Head of caudate nucleus (tissue), 42 donors: ENCODE measurements at regions of chr5 and their contacts with region 1.

Region 1: DNA sequence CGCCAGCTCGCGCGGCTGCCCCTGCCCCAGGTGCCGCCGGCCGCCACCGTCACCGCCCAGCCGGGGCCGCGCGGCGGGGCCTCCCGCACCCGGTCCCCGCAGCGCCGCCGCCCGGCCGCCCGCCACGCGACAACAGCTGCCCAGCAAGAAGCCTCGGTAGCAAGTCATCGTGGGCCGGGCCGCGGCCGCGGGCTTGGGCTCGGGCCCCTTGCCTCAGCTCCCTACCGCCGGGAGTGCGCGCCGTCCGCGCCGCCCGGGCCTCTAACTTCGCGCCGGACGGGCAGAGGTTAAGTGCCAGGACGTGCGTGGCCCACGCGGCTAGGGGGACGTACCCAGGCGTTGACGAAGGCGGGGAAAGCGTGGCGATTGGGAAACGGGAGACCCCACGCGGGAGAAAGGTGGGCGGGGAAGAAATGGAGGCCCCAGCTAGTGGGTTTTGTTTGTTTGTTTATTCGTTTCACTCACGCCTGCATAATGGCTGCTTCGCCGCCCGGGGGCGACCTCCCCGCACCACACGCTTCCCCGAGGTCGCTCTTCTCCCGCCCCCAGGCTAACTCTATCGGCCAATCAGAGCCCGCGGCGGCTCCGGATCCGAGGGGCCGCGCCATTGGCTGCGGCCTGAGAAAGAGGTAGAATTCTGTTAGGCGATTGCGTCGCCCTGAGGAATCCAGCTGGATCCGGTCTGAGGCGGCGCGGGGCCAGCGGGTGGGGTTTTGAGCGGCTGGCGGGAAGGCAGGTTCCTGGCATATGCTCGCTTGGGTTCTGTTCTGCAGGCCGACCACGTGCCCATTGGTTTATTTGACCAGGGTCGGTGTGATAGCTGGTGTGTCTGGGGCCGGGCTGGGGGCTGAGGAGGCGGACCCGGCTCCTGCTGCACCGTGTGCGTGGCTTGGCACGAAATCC is at the start of gene NADK2:
- DNase-seq: peak; percentile 92 to 99 (median 96)

Region 2: DNA sequence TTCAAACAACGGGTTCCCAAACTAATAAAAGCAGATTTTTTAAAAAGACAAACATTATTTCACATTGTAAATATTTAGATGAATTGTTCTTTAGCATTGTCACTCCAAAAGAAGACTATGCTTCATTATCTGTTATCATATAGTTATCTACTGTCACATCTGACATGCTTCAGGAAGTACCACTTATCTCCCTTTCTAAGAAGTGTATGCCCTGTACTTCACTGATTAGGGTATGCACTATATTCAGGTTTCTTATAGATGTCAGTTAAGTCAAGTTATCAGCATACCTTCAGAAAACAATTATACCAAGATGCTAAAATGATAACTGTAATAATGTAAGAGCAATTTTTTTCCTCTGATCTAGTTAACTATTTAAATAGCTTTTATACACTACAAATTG is 130.6 kb before region 1 on chr5:
- intact Hi-C with region 1: no loop called
- DNase-seq: no peak

Region 3: DNA sequence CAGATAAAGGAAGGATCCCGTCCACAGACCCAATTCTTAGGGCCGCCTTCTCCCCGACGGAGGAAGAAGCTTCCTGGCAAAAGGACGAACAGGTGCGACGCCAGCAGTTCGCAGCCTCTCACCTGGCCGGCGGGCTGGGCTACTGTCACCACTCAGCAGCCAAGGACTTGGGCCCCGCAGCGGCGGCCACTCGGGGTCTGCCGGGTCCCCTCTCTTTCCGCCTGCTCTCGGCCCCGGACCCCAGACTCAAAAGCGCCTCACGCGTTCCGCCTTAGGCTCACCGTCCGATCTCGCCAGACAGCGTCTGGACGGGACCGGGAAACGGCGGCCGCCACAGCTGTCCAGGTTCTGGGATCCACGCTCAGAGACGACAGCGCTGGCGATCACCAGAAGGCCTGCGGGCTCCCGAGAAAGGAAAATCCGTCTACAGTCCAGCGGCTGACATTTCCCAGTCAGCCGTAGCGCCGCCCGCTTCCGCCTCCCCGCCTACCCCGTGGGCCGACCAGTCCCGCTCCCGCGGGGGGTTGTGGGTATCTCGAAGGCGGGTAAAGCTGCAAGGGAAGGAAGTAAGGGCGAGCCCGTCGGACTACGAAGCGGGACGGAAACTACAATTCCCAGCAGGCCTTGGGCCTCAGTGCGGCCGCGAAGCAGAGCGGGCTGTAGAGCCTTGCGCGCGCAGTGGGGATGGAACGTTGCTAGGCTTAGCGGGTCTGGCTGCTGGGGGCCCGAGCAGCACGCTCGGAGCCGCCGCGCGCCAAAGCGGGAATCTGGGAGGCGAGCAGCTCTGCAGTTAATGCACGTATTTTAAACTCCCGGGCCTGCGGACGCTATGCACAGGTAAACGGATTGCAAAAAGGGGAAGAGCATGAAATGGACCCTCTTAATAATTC is 90.2 kb before region 1 on chr5 and contains the starts of genes LMBRD2 and SKP2:
- intact Hi-C with region 1: loop called (anchors 5 kb)
- DNase-seq: peak; percentile 96 to 100 (median 99)

Region 4: DNA sequence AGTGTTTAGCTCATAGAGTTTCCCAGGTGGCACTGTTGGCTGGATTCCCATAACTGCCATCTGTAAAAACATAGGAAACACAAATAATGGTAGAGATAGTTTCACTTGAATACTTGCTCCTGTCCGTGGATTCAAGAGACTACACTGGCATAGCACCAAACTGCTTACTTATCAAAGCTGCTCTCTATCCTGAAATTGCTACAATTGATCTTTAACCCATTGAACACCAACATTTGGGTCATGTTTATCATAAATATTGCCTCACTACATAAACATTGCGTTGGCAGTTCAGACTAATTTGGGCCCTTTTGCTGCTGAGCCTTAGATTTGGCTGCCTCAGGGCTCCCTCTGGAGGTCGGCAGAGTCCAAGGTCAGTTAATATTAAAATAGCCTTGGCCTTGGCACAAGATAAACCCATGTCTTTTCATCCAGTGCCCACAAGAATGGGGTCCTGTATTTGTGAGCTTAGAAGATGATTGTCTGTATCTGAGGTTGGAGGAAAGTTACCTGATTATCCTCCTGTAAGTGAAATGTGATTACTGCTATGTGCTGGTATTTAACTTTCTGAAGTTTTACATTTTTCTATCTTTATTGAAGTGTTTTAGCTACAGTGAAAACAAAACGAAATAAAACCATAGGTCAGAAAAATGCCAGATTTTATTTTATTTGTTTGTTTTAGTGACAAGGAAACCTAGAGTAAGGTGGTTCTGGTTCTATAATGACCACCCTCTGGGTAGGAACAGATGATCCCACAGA is 63.9 kb after region 1 on chr5:
- intact Hi-C with region 1: loop called (anchors 10 kb)
- DNase-seq: peak in 41 of 42 donors; percentile 21 to 81 (median 56)

Region 5: DNA sequence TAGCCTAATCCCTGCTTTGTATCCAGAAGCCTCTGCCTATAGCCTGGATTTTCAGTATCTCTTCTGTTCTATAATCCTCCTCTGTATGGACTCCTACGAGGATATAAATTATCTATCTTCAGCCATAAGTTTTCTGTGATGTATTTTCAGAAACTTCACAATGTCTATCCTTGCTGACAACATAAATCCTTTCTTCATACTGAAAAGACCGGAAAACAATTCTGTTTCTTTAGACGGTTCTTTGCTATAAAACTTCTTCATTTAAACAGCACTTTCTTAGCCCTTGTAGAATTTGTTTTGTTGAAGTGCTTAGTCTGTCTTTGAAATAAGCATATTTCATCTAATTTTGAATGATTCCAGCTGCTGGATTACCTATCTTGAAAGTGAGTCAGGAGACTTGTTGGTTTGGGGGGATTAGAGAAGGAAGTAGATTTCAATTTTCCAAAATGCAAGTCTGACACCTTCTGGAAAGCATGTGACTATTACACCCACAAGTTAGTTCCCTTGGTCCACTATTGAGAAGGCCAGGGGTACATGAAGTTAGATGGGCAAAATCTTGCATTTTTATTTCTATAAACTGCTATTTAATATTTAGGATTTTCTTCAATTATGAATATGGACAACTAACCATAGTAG is 156.1 kb after region 1 on chr5:
- intact Hi-C with region 1: loop called (anchors 10 kb)
- DNase-seq: no peak